ENCODE measurements at regions of chr10 and their contacts with region 1.

Region 1: DNA sequence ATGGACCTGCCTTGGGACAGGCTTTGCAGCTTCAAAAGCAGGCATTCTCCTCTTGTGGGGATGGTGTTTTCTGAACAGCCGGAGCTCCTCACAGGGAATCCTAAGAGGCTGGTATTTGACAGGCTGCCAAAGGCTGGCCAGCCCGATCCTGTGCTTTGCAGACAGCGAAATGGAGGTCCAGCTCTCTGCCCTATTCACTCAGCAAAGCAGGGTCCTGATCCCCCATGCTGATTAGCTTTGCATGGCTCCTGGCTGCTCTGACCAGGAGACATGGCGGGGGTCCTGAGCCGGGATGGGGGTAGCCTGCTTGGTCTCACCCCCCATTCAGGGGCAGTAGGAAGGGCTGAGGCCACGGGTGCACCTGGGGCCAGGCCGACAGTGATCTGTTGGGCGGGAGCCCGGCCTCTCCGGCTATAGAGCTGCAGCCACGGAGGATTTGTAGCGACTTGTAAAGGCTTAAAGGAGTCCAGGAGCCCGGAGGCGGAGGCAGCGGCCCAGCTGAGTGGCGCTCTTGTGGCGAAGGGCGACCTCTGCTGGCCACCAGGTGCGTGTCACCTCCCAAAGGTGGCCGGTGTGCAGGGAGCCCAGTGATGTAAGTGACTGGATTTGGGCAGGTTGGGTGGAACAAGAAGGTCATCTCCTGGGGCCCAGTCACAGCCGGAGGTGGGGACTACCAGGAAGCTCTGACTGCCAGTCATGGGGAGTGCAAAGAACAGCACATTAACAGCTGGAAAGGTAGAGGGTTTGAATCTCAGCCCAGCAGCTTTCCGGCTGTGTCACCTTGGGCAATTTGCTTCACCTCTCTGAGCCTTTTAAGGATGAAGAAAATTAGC is 126.5 kb downstream of the ZMIZ1 start:
- DNase-seq: peak; percentile 85 to 93 (median 90)
- ATAC-seq: peak; percentile 72 to 85 (median 77)
- H3K4me3 ChIP-seq: peak overlapping the region in 1 of 12 donors; percentile 1
- H3K27ac ChIP-seq: peak overlapping the region in 11 of 12 donors; percentile 41 to 78 (median 70)
- H3K4me1 ChIP-seq: peaks cover 0 to 65% (median 46%) of the 10 kb centered on the region in 12 donors
- H3K27me3 ChIP-seq: no peaks in the 10 kb centered on the region
- CTCF ChIP-seq: peak; percentile 90 to 99 (median 97)
- POLR2A ChIP-seq: no peak

Region 2: GRCh38 chr10:78211561-78212051 is 983.7 kb before region 1 on chr10:
- intact Hi-C with region 1: loop called in 8 of 10 experiments (anchors 5 to 10 kb)
- DNase-seq: peak in 1 of 5 donors; percentile 47
- ATAC-seq: peak in 3 of 4 donors; percentile 5 to 18 (median 9)
- H3K4me3 ChIP-seq: no peak overlapping the region
- H3K27ac ChIP-seq: peak overlapping the region in 5 of 12 donors; percentile 19 to 62 (median 52)
- H3K4me1 ChIP-seq: peaks cover 0 to 38% (median 19%) of the 10 kb centered on the region in 12 donors
- H3K27me3 ChIP-seq: no peaks in the 10 kb centered on the region
- CTCF ChIP-seq: peak in 11 of 12 donors; percentile 21 to 69 (median 55)
- POLR2A ChIP-seq: no peak

Region 3: GRCh38 chr10:78599081-78599853 is 596.0 kb before region 1 on chr10:
- intact Hi-C with region 1: loop called in 1 of 10 experiments (anchors 10 kb)
- DNase-seq: no peak
- ATAC-seq: no peak
- H3K4me3 ChIP-seq: no peak overlapping the region
- H3K27ac ChIP-seq: no peak overlapping the region
- H3K4me1 ChIP-seq: no peaks in the 10 kb centered on the region
- H3K27me3 ChIP-seq: no peaks in the 10 kb centered on the region
- CTCF ChIP-seq: no peak
- POLR2A ChIP-seq: no peak

Region 4: DNA sequence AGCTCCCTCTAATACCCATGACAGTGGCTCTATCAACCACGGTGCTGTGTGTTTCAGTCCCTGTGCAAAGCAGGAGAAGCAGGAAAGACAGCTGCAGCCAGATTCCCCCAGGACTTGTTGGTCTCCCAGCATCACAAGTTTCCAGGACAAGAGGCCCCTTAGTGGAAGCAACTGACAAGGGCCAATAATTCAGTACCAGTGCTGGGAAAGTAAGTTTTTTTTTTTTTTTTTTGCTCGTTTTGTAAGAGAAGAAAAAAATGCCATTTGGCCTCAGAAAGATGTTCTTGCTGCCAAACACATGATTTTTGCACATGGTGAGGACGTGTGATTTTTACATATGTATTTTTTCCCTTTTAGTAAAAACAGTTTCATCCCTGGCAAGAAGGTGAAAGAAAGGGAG is 410.8 kb before region 1 on chr10:
- intact Hi-C with region 1: loop called in 1 of 10 experiments (anchors 10 kb)
- DNase-seq: peak in 1 of 5 donors; percentile 45
- ATAC-seq: no peak
- H3K4me3 ChIP-seq: no peak overlapping the region
- H3K27ac ChIP-seq: no peak overlapping the region
- H3K4me1 ChIP-seq: peaks cover 0 to 27% (median 6%) of the 10 kb centered on the region in 12 donors
- H3K27me3 ChIP-seq: no peaks in the 10 kb centered on the region
- CTCF ChIP-seq: no peak
- POLR2A ChIP-seq: no peak

Region 5: GRCh38 chr10:78981257-78981969 is 213.9 kb before region 1 on chr10:
- intact Hi-C with region 1: loop called in 5 of 10 experiments (anchors 5 to 10 kb)
- DNase-seq: no peak
- ATAC-seq: no peak
- H3K4me3 ChIP-seq: no peak overlapping the region
- H3K27ac ChIP-seq: no peak overlapping the region
- H3K4me1 ChIP-seq: peaks cover 0 to 19% (median 0%) of the 10 kb centered on the region in 12 donors
- H3K27me3 ChIP-seq: no peaks in the 10 kb centered on the region
- CTCF ChIP-seq: no peak
- POLR2A ChIP-seq: no peak

Region 6: GRCh38 chr10:79123547-79123963 is 71.8 kb before region 1 on chr10:
- intact Hi-C with region 1: no loop called
- DNase-seq: peak in 1 of 5 donors; percentile 58
- ATAC-seq: peak in 3 of 4 donors; percentile 11 to 34 (median 26)
- H3K4me3 ChIP-seq: no peak overlapping the region
- H3K27ac ChIP-seq: peak overlapping the region in 10 of 12 donors; percentile 15 to 97 (median 25)
- H3K4me1 ChIP-seq: peaks cover 4 to 98% (median 55%) of the 10 kb centered on the region in 12 donors
- H3K27me3 ChIP-seq: no peaks in the 10 kb centered on the region
- CTCF ChIP-seq: no peak
- POLR2A ChIP-seq: no peak

Region 7: GRCh38 chr10:79149662-79150443 is 45.5 kb before region 1 on chr10:
- intact Hi-C with region 1: loop called in 3 of 10 experiments (anchors 5 kb)
- DNase-seq: peak; percentile 87 to 95 (median 92)
- ATAC-seq: peak; percentile 38 to 68 (median 64)
- H3K4me3 ChIP-seq: peak overlapping the region in 2 of 12 donors; percentile 1 to 4
- H3K27ac ChIP-seq: peak overlapping the region; percentile 88 to 98 (median 94)
- H3K4me1 ChIP-seq: peaks cover 69 to 100% (median 100%) of the 10 kb centered on the region in 12 donors
- H3K27me3 ChIP-seq: no peaks in the 10 kb centered on the region
- CTCF ChIP-seq: peak in 2 of 12 donors; percentile 7 to 14
- POLR2A ChIP-seq: peak in 1 of 2 donors; percentile 18

Measured in heart left ventricle (tissue), 16 donors.